IMR-90 (cell line): ENCODE measurements at regions of chr4 and their contacts with region 1.

Region 1: DNA sequence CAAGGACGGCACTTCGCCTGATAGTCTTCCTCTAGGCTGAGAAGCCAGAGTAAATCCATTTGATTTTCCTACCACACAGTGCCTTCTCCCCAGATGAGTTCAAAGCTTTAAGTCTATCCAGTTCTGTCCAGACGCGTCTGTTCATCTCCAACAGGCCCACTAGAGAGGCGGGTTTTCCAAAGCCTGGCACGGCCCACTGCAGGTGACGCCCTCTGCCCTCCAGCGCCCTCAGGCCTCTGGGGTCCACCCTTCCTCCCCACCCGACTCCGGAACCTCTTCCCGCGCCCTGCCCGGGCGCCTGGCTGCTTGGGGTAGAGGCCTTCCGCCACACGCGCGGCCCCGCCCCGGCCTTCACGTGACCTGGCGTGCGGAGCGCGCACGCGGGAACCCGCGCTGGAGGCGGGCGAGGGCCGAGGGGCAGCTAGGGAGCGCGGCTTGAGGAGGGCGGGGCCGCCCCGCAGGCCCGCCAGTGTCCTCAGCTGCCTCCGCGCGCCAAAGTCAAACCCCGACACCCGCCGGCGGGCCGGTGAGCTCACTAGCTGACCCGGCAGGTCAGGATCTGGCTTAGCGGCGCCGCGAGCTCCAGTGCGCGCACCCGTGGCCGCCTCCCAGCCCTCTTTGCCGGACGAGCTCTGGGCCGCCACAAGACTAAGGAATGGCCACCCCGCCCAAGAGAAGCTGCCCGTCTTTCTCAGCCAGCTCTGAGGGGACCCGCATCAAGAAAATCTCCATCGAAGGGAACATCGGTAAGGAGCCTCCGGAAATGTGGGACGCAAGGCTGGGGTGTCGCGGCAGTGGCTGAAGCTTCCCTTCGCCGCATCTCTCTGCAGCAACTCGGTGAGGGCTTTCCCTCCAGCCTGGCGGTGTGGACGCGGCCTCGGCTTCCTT is at the start of gene DCK:
- DNase-seq: peak; percentile 90
- ATAC-seq: peak; percentile 95
- H3K4me3 ChIP-seq: peak within 1 kb of the TSS; percentile 87
- H3K27ac ChIP-seq: peak within 1 kb of the TSS; percentile 94
- H3K4me1 ChIP-seq: peaks cover 5% of the 10 kb centered on the region
- H3K27me3 ChIP-seq: no peaks in the 10 kb centered on the region
- CTCF ChIP-seq: no peak
- POLR2A ChIP-seq: peak; percentile 75
- RAD21 ChIP-seq: peak; percentile 25
- total RNA-seq, gene DCK: 7.0 and 14.4 TPM in 2 replicates

Region 2: GRCh38 chr4:70901984-70902576 is 91.3 kb before region 1 on chr4 and contains the start of gene MOB1B:
- CTCF ChIA-PET with region 1: no interaction called
- POLR2A ChIA-PET with region 1: interaction called, 3 read pairs
- dilution Hi-C with region 1: no loop called
- in situ Hi-C with region 1: no loop called
- intact Hi-C with region 1: loop called (anchors 5 kb)
- DNase-seq: peak; percentile 88
- ATAC-seq: peak; percentile 96
- H3K4me3 ChIP-seq: peak within 1 kb of the TSS; percentile 83
- H3K27ac ChIP-seq: peak within 1 kb of the TSS; percentile 88
- H3K4me1 ChIP-seq: 0 out of 2 replicates have a peak, but pooled peaks cover 1% of the 10 kb centered on the region
- H3K27me3 ChIP-seq: no peaks in the 10 kb centered on the region
- CTCF ChIP-seq: peak; percentile 45
- POLR2A ChIP-seq: peak; percentile 78
- RAD21 ChIP-seq: peak; percentile 43; the same call in 1 of the 2 replicates
- total RNA-seq, gene MOB1B: 5.7 and 15.0 TPM in 2 replicates

Region 3: DNA sequence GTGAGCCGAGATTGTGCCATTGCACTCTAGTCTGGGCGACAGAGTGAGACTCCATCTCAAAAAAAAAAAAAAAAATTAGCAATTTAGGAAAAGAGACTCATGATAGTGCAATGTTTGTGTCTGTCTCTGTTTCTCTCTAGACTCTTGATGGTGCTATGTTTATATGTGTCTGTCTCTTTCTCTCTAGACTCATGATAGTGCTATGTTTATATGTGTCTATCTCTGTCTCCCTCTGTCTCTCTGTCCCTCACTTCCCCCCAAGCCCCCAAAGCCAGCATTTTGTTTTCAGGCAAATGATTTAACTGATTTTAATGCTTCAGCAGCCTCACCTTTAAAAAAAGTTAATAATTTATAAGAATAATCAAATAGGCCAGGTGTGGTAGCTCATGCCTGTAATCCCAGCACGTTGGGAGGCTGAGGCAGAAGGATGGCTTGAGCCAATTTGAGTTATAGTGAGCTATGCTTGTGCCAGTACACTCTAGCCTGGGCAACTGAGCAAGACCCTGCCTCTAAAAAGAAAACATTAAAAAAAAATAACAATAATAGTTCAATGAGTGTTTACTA is 84.3 kb before region 1 on chr4:
- CTCF ChIA-PET with region 1: no interaction called
- POLR2A ChIA-PET with region 1: interaction called, 14 read pairs
- dilution Hi-C with region 1: no loop called
- in situ Hi-C with region 1: no loop called
- intact Hi-C with region 1: loop called (anchors 5 kb)
- DNase-seq: no peak
- ATAC-seq: no peak
- H3K4me3 ChIP-seq: no peak overlapping the region
- H3K27ac ChIP-seq: no peak overlapping the region
- H3K4me1 ChIP-seq: peaks cover 5% of the 10 kb centered on the region
- H3K27me3 ChIP-seq: no peaks in the 10 kb centered on the region
- CTCF ChIP-seq: no peak
- POLR2A ChIP-seq: no peak
- RAD21 ChIP-seq: no peak

Region 4: DNA sequence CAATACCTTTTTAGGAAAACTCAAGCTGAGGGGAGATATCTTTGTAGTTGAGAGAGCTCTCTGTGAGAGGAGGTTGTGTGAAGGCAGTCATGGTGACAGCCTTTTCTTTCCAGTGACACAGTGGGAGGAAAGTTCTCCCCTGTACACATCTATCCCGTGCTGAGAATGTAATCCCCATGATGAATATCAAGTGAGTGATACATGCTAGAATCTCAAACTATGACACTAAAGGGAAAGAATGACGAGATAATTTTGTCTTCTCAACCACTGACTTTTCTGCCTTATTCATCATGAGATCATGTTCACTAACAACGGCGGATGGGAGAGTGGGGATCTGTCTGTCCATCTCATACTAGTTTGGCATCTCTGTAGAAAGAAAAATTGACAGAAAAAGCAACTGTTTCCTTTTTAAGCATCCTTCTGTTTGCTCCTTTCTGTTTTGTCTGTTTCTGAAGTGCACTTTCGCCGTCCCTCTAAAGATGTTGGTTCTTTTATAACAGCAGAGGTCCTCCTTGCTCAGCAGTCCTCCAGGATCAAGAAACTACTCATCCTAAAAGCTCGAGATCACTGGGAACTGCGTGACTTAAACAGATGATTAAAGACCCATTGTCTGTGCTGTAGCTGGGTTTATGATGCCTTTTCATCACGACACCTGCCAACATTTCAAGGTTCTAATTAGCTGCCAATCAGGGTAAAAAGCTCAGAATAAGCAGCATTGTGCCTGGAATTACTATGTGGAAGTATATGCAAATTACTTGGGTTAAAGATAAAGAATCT is 137.6 kb after region 1 on chr4:
- CTCF ChIA-PET with region 1: no interaction called
- POLR2A ChIA-PET with region 1: no interaction called
- dilution Hi-C with region 1: no loop called
- in situ Hi-C with region 1: no loop called
- intact Hi-C with region 1: no loop called
- DNase-seq: peak; percentile 89
- ATAC-seq: peak; percentile 77
- H3K4me3 ChIP-seq: peak overlapping the region; percentile 49; the same call in 1 of the 2 replicates
- H3K27ac ChIP-seq: peak overlapping the region; percentile 38
- H3K4me1 ChIP-seq: peaks cover 10% of the 10 kb centered on the region
- H3K27me3 ChIP-seq: no peaks in the 10 kb centered on the region
- CTCF ChIP-seq: peak; percentile 50
- POLR2A ChIP-seq: no peak; the same call in 1 of the 2 replicates
- RAD21 ChIP-seq: peak; percentile 58